Endothelial cell of umbilical vein (primary cell): ENCODE measurements at regions of chr1 and their contacts with region 1.

Region 1: DNA sequence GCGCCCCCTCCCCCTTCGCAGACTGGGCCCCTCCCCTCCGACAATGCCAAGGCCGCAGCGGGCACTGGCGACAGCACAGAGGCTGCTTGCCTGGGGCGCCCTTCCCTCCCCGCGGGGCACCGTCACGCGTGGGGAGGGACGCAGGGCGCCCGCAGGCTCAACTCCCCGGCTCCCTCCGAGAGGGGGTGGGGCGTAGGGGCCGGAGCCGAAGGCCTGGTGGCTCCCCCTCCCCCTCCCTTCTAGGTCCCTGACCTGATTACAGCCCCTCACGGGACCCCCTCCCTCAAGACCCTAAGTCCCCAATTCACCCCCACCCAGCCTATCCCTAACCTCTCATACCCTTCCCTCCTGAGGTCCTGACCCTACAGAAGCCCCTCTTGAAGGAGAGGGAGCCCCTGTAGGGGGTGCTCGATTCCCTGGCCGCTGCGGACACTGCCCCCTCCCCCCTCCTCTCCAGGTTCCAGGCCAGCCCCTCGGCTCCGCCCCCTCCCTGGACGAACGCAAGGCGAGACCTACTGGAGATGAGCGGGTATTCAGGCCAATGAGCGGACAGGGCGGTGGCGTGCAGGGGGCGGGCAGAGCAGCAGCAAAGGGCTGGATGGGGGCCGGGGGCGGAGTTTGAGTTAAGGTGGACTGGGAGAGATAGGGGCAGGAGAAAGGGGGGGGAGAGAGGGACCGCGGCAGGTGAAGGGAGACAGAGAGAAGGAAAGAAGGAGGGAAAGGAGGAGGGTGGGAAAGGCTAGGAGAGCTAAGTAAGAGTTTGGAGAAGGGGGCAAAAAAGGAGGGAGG is 733 bp upstream of the ZBTB7B start:
- DNase-seq: peak; percentile 99
- H3K4me3 ChIP-seq: peak overlapping the region; percentile 57 to 94 (median 61)
- H3K27ac ChIP-seq: peak overlapping the region; percentile 26
- H3K4me1 ChIP-seq: peaks cover 25% of the 10 kb centered on the region
- H3K27me3 ChIP-seq: no peaks in the 10 kb centered on the region
- CTCF ChIP-seq: peak; percentile 12 to 63
- POLR2A ChIP-seq: no peak

Region 2: DNA sequence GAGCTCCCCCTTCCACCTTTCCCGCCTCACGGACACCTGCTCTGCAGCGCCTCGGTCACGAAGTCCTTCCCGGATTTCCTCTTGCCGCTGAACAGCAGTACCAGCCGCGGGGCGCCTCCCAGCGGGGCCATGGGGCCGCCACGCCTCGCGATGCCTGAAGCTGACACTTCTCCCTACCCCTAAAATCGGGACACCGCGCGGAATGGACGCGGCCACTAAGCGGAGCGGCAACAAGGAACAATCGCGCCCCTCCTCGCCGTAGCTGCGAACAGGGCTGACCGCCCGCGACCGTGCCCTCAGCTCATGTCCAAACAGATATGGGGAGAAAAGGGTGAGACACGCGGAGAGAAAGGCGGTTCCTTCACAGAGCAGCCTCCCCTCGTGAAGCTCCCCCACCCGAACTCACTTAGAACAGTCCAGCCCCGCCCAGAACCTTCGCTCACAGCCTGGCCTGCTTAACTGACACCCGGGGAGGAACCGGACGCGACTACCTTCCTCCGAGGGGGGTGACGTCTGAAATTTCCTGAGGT is 65.2 kb before region 1 on chr1 and contains the start of gene PMVK:
- CTCF ChIA-PET with region 1: interaction called, 13 read pairs
- POLR2A ChIA-PET with region 1: no interaction called
- dilution Hi-C with region 1: no loop called
- intact Hi-C with region 1: loop called (anchors 1 kb)
- DNase-seq: peak; percentile 94
- H3K4me3 ChIP-seq: peak within 1 kb of the TSS; percentile 26 to 79 (median 55)
- H3K27ac ChIP-seq: peak within 1 kb of the TSS; percentile 92
- H3K4me1 ChIP-seq: peaks cover 8% of the 10 kb centered on the region
- H3K27me3 ChIP-seq: no peaks in the 10 kb centered on the region
- CTCF ChIP-seq: peak in 1 of 2 donors; percentile 36
- POLR2A ChIP-seq: peak; percentile 73
- total RNA-seq, gene PMVK: 22.6 and 23.0 TPM in 2 replicates

Region 3: GRCh38 chr1:154961497-154962262 is 40.2 kb before region 1 on chr1 and contains the start of gene PYGO2:
- CTCF ChIA-PET with region 1: interaction called, 48 read pairs
- POLR2A ChIA-PET with region 1: interaction called, 3 read pairs
- dilution Hi-C with region 1: no loop called
- intact Hi-C with region 1: loop called (anchors 1 kb)
- DNase-seq: peak; percentile 81
- H3K4me3 ChIP-seq: peak within 1 kb of the TSS; percentile 71 to 78 (median 74)
- H3K27ac ChIP-seq: peak within 1 kb of the TSS; percentile 82
- H3K4me1 ChIP-seq: peaks cover 28% of the 10 kb centered on the region
- H3K27me3 ChIP-seq: no peaks in the 10 kb centered on the region
- CTCF ChIP-seq: peak; percentile 35 to 65
- POLR2A ChIP-seq: peak; percentile 84
- total RNA-seq, gene PYGO2: 21.5 and 21.9 TPM in 2 replicates

Region 4: DNA sequence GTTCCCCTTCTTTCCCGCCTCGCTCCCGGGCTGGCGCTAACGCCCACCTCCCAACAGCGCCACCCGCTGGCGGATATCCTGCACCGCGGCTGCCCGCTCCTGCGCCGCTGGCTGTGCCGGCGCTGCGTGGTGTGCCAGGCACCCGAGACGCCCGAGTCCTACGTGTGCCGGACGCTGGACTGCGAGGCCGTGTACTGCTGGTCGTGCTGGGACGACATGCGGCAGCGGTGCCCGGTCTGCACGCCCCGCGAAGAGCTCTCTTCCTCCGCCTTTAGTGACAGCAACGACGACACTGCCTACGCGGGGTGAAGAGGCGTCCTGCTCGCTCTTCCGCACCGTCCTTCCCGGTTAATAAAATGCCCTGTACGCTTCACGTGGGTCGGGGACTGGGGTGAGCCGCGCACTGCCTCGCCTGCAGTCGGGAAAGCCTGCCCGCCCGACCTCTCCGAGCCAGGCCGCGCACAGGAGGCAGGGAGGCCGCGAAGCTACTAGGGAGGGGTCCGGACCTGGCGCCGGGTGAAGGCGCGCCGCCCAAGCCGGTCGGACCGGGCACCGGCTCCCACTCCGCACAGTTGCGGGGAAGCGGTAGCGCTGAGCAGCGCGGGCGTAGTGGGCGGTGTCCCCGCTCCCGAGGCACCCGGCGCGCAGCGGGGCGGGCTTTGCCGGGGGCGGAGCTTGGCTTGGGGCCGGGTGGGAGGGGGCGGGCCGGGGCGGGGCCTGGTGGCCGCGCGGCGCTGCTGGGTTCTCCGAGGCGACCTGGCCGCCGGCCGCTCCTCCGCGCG is 48.9 kb after region 1 on chr1 and contains the start of gene ADAM15:
- CTCF ChIA-PET with region 1: interaction called, 12 read pairs
- POLR2A ChIA-PET with region 1: no interaction called
- dilution Hi-C with region 1: no loop called
- intact Hi-C with region 1: loop called (anchors 1 kb)
- DNase-seq: peak; percentile 81
- H3K4me3 ChIP-seq: peak within 1 kb of the TSS; percentile 66 to 75 (median 74)
- H3K27ac ChIP-seq: peak within 1 kb of the TSS; percentile 53
- H3K4me1 ChIP-seq: peaks cover 24% of the 10 kb centered on the region
- H3K27me3 ChIP-seq: no peaks in the 10 kb centered on the region
- CTCF ChIP-seq: peak; percentile 94 to 99
- POLR2A ChIP-seq: no peak
- total RNA-seq, gene ADAM15: 268 and 299 TPM in 2 replicates